Aorta (tissue), 5 donors: ENCODE measurements at regions of chr7 and their contacts with region 1.

Region 1: GRCh38 chr7:143380646-143381426 is at the start of gene ZYX:
- DNase-seq: peak; percentile 98 to 99
- ATAC-seq: peak; percentile 92
- H3K4me3 ChIP-seq: peak within 1 kb of the TSS; percentile 91 to 95
- H3K27ac ChIP-seq: peak within 1 kb of the TSS; percentile 96 to 100
- H3K4me1 ChIP-seq: peaks cover 0 to 2% of the 10 kb centered on the region in 2 donors
- H3K27me3 ChIP-seq: no peaks in the 10 kb centered on the region
- total RNA-seq, gene ZYX: 307 to 499 TPM

Region 2: GRCh38 chr7:143362131-143363015 is 18.5 kb before region 1 on chr7 and contains the start of gene FAM131B:
- intact Hi-C with region 1: loop called in 1 of 2 experiments (anchors 2 kb)
- DNase-seq: peak in 1 of 2 donors; percentile 81
- ATAC-seq: peak; percentile 39
- H3K4me3 ChIP-seq: peak within 1 kb of the TSS; percentile 62 to 66
- H3K27ac ChIP-seq: no peak within 1 kb of the TSS
- H3K4me1 ChIP-seq: no peaks in the 10 kb centered on the region
- H3K27me3 ChIP-seq: no peaks in the 10 kb centered on the region
- total RNA-seq, gene FAM131B: 2.8 to 3.8 TPM

Region 3: DNA sequence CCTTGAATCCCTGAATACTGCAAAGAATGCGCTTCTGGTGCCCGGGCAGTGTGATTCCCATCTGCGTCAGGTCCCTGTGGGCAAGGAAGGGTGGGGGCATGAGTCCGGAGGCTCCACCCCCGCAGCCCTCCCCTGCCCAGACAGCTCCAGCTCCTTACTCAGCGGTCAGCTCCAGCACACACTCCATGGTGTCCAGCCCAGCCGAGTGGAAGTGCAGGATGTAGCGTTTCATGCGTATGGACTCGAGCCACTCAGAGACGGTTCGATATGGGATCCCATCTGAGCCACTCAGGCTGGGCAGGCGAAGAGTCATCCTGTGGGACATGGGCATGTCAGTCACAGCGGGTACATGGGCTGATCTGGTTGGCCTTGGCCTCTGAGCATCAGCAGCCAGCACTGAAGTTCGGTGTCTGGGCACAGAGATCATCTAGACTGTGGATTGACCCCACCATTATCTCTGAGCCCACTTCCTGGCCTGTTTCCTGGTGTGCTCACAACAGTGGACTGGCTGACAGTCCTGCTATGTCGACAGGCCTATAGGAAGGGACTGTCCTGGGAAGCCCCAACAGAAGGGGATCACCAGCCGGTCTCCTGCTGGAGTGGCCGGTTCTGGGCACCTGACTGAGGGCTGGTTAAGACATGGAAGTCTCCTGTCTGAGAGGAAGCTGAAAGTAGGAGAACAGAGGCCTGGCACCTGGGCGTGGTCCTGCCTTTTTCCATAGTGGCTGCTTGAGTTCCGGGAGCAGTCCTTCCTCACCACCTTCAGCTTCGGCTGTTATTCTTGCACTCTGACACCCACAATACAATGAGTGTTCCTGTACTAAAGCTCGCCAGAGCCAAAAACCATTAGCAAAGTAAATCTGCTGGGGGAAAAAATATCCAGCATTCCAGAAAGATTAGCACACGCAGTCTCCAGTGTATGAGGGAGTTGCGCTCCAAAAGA is 10.9 kb after region 1 on chr7:
- intact Hi-C with region 1: loop called in 1 of 2 experiments (anchors 1 kb)
- DNase-seq: peak; percentile 93 to 96
- ATAC-seq: peak; percentile 90
- H3K4me3 ChIP-seq: no peak overlapping the region
- H3K27ac ChIP-seq: peak overlapping the region; percentile 70 to 98
- H3K4me1 ChIP-seq: no peaks in the 10 kb centered on the region
- H3K27me3 ChIP-seq: no peaks in the 10 kb centered on the region

Region 4: GRCh38 chr7:143429770-143430698 is 49.2 kb after region 1 on chr7:
- intact Hi-C with region 1: no loop called
- DNase-seq: no peak
- ATAC-seq: no peak
- H3K4me3 ChIP-seq: no peak overlapping the region
- H3K27ac ChIP-seq: no peak overlapping the region
- H3K4me1 ChIP-seq: no peaks in the 10 kb centered on the region
- H3K27me3 ChIP-seq: no peaks in the 10 kb centered on the region

Region 5: GRCh38 chr7:143463556-143463955 is 82.7 kb after region 1 on chr7:
- intact Hi-C with region 1: no loop called
- DNase-seq: no peak
- ATAC-seq: no peak
- H3K4me3 ChIP-seq: no peak overlapping the region
- H3K27ac ChIP-seq: no peak overlapping the region
- H3K4me1 ChIP-seq: no peaks in the 10 kb centered on the region
- H3K27me3 ChIP-seq: no peaks in the 10 kb centered on the region